ENCODE measurements at regions of chr1 and their contacts with region 1.

Region 1: GRCh38 chr1:154974063-154974807 is at the start of gene CKS1B:
- DNase-seq: peak; percentile 97 to 99
- H3K4me3 ChIP-seq: peak within 1 kb of the TSS; percentile 61 to 82
- H3K27ac ChIP-seq: peak within 1 kb of the TSS; percentile 95 to 99
- H3K4me1 ChIP-seq: peaks cover 22 to 33% of the 10 kb centered on the region in 2 donors
- H3K27me3 ChIP-seq: no peaks in the 10 kb centered on the region
- CTCF ChIP-seq: no peak
- total RNA-seq, gene CKS1B: 40.4 TPM

Region 2: DNA sequence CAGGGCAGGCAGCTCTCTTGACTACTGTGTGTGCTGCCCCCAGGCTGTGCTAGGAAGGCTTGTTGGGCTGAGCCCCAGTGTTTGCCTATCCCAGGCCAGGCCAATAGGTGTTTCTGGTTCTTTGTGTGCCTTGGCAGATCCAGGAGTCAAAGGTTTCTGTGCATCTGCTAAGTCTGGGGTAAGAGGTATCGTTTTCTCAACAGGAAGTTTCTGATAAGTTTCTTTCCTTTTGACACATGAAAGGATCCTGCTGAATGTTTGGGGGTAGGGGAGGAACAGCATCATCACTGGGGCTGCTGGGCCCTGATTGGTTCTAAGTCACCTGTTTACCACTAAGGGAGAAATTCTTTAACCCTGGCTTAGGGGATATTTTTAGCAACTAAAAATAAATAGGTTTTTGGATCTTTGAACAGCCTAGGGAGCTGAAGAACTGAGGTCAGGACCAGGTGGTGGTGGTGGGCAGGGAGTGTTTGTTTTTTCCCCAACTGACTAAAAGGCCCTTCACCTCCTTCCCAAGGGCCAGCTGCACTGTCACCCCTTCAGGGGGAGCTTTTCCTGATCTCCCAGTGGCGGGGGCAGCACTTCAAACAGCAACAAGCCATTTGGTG is 189.2 kb before region 1 on chr1:
- intact Hi-C with region 1: no loop called
- DNase-seq: no peak
- H3K4me3 ChIP-seq: no peak overlapping the region
- H3K27ac ChIP-seq: no peak overlapping the region
- H3K4me1 ChIP-seq: no peaks in the 10 kb centered on the region
- H3K27me3 ChIP-seq: no peaks in the 10 kb centered on the region
- CTCF ChIP-seq: no peak

Region 3: DNA sequence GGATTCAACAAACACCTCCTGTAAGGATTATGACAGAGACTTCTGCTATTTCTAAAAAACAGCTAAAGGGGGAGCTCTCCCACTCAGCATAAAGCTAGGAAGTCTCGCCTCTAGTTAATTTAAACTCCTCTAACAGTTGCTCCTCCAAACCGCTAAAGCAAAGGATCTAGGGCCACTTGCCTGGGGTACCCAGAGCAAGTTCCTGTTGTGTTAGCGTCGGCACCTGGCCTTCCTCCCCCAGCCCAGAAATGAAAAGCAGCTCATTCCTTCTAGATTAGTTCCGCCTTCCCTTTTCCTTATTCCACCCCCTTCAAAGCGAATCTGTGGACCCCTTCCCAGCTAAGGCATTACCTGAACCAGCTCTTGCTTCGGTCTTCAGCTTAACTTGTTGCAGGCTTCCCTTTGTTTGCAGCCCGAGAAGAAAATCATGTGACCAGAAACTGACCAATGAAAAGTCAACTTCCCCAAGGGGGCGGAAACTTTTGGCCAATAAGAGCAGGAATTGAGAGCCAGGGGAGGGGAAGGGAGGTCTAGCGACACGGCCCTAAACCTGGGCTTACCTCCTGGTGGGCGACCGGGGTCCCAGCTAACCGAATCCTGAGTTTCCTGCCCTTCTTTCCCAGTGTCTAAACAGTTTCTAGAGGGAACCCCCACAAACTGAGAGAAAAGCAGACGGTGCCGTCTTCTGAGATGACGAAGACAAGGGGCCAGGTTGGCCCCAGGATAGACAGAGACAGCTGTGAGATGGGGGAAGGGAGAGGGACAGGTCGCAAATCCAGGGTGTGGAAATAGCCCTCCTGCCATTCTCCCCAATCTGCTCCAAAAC is 18.3 kb before region 1 on chr1 and contains the start of gene PBXIP1:
- intact Hi-C with region 1: loop called (anchors 2 kb)
- DNase-seq: peak; percentile 52 to 93
- H3K4me3 ChIP-seq: peak within 1 kb of the TSS; percentile 68 to 70
- H3K27ac ChIP-seq: peak within 1 kb of the TSS; percentile 65 to 83
- H3K4me1 ChIP-seq: peaks cover 18 to 47% of the 10 kb centered on the region in 2 donors
- H3K27me3 ChIP-seq: no peaks in the 10 kb centered on the region
- CTCF ChIP-seq: peak in 2 of 3 experiments; percentile 15 to 26
- total RNA-seq, gene PBXIP1: 70.0 TPM

Region 4: DNA sequence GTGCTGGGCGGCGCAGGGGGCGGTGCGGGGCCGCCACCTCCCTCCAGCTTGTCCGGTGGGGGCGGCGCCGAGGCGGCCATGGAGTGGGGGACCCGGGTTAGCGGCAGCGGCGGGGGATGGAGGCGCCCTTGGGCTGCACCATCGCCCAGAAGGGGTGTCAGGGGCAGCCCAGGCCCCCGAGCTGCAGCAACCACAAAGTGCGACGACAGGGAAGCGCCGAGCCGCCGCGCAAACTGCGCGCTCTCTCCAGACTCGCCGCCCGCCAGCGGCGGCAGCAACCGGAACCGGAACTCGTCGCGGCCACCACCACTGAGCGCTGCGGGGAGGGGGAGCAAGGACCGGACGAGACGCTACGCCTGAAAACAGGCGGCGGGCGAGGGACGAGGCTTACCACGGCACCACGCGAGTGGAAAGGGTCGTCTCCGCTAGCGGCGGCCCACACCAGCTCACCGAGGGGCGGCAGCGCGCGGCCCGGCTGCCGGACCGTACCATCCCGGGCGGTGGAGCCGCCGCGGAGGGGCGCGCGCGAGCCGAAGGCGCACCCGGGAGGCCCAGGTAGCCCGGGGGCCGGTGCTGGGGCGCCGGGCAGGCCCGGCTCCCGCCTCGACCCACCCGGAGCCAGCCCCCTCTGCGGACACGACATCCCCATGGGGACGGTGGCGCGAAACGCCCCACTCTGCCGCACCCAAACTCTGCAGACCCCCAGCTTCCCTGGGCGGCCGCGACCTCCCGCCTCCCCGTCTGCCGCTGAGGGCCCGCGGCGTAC is 12.6 kb before region 1 on chr1 and contains the start of gene PYGO2:
- intact Hi-C with region 1: loop called (anchors 1 kb)
- DNase-seq: peak in 1 of 2 donors; percentile 90
- H3K4me3 ChIP-seq: peak within 1 kb of the TSS; percentile 97
- H3K27ac ChIP-seq: peak within 1 kb of the TSS; percentile 95 to 97
- H3K4me1 ChIP-seq: peaks cover 3 to 27% of the 10 kb centered on the region in 2 donors
- H3K27me3 ChIP-seq: no peaks in the 10 kb centered on the region
- CTCF ChIP-seq: peak; percentile 45 to 95 (median 52)
- total RNA-seq, gene PYGO2: 48.7 TPM

Region 5: GRCh38 chr1:155017041-155017945 is 43.1 kb after region 1 on chr1:
- intact Hi-C with region 1: loop called (anchors 2 kb)
- DNase-seq: peak; percentile 68 to 96
- H3K4me3 ChIP-seq: peak overlapping the region; percentile 42 to 59
- H3K27ac ChIP-seq: peak overlapping the region; percentile 82 to 89
- H3K4me1 ChIP-seq: peaks cover 7 to 15% of the 10 kb centered on the region in 2 donors
- H3K27me3 ChIP-seq: no peaks in the 10 kb centered on the region
- CTCF ChIP-seq: peak; percentile 99 to 100 (median 99)

Region 6: DNA sequence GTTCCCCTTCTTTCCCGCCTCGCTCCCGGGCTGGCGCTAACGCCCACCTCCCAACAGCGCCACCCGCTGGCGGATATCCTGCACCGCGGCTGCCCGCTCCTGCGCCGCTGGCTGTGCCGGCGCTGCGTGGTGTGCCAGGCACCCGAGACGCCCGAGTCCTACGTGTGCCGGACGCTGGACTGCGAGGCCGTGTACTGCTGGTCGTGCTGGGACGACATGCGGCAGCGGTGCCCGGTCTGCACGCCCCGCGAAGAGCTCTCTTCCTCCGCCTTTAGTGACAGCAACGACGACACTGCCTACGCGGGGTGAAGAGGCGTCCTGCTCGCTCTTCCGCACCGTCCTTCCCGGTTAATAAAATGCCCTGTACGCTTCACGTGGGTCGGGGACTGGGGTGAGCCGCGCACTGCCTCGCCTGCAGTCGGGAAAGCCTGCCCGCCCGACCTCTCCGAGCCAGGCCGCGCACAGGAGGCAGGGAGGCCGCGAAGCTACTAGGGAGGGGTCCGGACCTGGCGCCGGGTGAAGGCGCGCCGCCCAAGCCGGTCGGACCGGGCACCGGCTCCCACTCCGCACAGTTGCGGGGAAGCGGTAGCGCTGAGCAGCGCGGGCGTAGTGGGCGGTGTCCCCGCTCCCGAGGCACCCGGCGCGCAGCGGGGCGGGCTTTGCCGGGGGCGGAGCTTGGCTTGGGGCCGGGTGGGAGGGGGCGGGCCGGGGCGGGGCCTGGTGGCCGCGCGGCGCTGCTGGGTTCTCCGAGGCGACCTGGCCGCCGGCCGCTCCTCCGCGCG is 76.5 kb after region 1 on chr1 and contains the start of gene ADAM15:
- intact Hi-C with region 1: loop called (anchors 2 kb)
- DNase-seq: peak in 1 of 2 donors; percentile 90
- H3K4me3 ChIP-seq: peak within 1 kb of the TSS; percentile 69 to 80
- H3K27ac ChIP-seq: peak within 1 kb of the TSS; percentile 83 to 86
- H3K4me1 ChIP-seq: peaks cover 0 to 20% of the 10 kb centered on the region in 2 donors
- H3K27me3 ChIP-seq: no peaks in the 10 kb centered on the region
- CTCF ChIP-seq: peak; percentile 87 to 97 (median 88)
- total RNA-seq, gene ADAM15: 610 TPM